Brain microvascular endothelial cell (primary cell): ENCODE measurements at regions of chr3 and their contacts with region 1.

Region 1: GRCh38 chr3:61858056-61858455 is 296.7 kb downstream of the PTPRG start:
- DNase-seq: no peak
- H3K4me3 ChIP-seq: no peak overlapping the region
- H3K27ac ChIP-seq: no peak overlapping the region
- H3K27me3 ChIP-seq: no peaks in the 10 kb centered on the region
- CTCF ChIP-seq: peak; percentile 46

Region 2: DNA sequence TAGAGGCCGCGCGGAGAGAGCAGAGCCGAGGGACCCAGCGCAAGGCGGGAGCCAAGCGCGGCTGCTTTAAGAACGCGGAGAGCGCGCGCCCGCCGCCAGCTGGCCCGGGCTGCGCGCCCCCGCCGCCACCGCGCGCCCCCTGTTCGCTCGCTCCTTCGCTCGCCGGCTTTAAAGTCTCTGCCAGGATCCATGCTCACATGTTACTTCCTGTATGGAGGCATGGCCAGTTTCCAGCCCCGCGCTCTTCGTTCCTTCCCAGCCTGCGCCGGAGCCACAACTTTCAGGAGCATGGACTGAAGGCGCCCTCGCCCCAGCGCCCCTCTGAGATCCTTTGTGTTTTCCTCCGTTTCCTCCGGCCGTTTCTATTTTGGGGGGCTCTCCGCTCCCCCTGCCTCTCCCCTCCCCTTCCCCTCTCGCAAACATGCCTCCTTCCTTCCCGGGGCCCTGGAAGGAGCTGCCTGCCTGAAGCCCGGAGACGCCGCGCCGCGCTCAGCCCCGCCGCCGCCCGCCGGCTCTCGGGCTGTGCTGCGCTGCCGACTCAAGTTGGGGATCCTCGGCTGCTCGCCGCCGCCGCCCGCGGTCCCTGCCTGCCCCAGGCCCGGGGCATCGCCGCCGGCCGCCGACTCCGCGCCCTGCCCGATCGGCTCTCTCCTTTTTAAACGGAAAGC is 296.5 kb before region 1 on chr3 and contains the start of gene PTPRG:
- in situ Hi-C with region 1: loop called (anchors 25 kb)
- DNase-seq: peak; percentile 87
- H3K4me3 ChIP-seq: peak within 1 kb of the TSS; percentile 82
- H3K27ac ChIP-seq: peak within 1 kb of the TSS; percentile 92
- H3K27me3 ChIP-seq: no peaks in the 10 kb centered on the region
- CTCF ChIP-seq: no peak

Region 3: DNA sequence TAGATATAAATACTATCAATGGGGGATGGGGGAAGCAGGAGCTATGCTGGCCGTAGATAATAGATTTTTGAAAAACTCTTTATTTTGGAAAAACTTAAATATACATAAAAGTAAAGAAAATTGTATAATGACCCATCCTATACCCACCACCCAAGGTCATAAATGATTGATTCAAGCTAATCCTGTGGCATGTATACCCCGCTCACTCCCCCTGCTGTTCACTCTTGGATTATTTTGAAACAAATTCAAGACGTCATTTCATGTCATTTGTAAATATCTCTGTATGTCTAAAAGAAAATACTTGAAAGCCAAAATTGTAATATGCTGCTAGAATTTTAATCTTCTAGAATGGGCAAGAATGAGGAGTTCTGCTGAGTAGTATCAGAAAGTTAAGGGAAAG is 273.5 kb after region 1 on chr3:
- in situ Hi-C with region 1: loop called (anchors 25 kb)
- DNase-seq: no peak
- H3K4me3 ChIP-seq: no peak overlapping the region
- H3K27ac ChIP-seq: no peak overlapping the region
- H3K27me3 ChIP-seq: no peaks in the 10 kb centered on the region
- CTCF ChIP-seq: peak; percentile 61